B cell (primary cell): ENCODE measurements at regions of chr19 and their contacts with region 1.

Region 1: GRCh38 chr19:36687214-36688056 is at the start of gene ZNF567:
- DNase-seq: peak; percentile 96
- ATAC-seq: peak; percentile 94
- H3K4me3 ChIP-seq: peak within 1 kb of the TSS; percentile 48 to 90 (median 76)
- H3K4me3 Mint-ChIP-seq: peak within 1 kb of the TSS; percentile 100
- H3K27ac ChIP-seq: peak within 1 kb of the TSS; percentile 56 to 72
- H3K27ac Mint-ChIP-seq: peak within 1 kb of the TSS; percentile 96
- H3K4me1 ChIP-seq: peaks cover 14 to 19% of the 10 kb centered on the region in 2 donors
- H3K4me1 Mint-ChIP-seq: peaks cover 28% of the 10 kb centered on the region
- H3K27me3 ChIP-seq: no peaks in the 10 kb centered on the region
- H3K27me3 Mint-ChIP-seq: no peaks in the 10 kb centered on the region
- CTCF ChIP-seq: no peak
- total RNA-seq, gene ZNF567: 19.7 and 22.4 TPM in 2 replicates

Region 2: DNA sequence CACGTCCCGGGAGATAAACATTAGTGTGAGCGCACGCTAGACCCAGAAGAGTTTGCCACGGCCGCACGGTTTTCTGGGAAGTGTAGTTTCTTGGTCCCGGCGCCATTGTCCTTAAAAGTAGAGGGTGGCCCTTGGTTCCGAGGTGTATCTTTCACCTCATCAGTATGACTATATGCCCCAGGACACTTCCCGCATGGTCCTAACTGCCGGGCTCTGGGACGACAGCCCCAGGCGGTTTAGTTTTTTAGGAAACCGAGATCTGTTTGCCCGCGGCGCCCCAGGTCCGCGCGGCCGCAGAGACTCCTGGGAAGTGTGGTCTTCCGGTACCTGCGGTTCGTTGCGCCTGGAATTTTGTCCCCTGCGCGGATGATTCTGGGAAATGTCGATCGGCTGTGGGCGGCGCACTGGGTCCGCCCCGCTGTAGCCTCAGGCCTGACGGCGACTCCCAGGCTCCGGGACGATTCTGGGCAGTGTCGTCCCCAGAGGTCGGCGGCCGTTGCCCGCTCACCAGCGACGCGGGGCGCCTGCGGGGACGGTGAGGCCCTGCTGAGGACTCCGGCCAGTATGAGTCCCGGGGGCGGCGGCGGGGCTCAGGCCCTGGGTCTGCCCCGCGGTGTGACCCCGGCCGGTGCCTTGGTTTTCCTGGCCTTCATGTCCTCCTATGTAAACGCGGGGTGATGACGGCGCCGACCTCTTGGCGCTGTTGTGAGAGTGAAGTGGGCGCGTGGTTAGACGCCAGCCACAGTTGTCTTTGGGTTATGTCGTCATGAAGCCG is 1953.4 kb before region 1 on chr19 and contains the start of gene ZNF181:
- CTCF ChIA-PET with region 1: no interaction called
- POLR2A ChIA-PET with region 1: no interaction called
- intact Hi-C with region 1: loop called (anchors 10 kb)
- DNase-seq: peak; percentile 89
- ATAC-seq: peak; percentile 86
- H3K4me3 ChIP-seq: peak within 1 kb of the TSS; percentile 65 to 87 (median 80)
- H3K4me3 Mint-ChIP-seq: peak within 1 kb of the TSS; percentile 97
- H3K27ac ChIP-seq: peak within 1 kb of the TSS; percentile 73 to 91
- H3K27ac Mint-ChIP-seq: peak within 1 kb of the TSS; percentile 96
- H3K4me1 ChIP-seq: peaks cover 15 to 25% of the 10 kb centered on the region in 2 donors
- H3K4me1 Mint-ChIP-seq: peaks cover 25% of the 10 kb centered on the region
- H3K27me3 ChIP-seq: no peaks in the 10 kb centered on the region
- H3K27me3 Mint-ChIP-seq: no peaks in the 10 kb centered on the region
- CTCF ChIP-seq: no peak
- total RNA-seq, gene ZNF181: 13.6 and 13.8 TPM in 2 replicates

Region 3: DNA sequence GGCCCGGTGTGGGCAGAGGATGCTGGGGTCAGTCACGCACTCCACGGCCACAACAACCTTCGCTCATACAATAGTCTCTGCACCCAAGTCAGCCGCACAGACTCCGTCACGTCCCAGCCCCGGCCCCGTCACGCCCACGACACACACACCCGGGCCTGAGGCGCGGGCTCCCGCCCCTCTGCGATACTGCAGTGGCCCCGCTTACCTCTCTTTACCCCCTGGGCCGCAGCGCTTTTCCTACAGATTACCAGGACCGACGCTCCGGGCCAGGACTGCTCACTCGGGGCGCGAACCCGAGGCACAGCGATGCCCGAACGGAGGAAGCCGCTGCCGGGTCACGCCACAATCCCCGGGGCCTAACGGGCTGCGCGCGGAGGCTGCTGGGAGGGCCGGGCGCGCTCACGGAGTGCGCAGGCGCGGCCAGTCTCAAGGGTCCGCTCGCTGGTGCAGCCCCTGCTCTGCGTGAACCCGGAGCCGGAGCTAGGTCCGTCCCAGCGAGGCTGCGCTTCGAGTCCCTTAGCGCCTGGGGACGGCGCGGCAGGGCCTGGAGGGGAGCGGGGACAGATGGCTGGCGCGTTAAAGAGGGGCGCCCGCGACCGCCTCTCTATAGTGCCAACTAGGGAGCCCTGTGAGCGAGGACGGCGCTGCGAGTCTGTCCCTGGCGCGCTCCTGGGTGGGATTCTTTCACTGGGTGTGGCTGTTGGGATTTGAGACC is 269.0 kb before region 1 on chr19 and contains the start of gene ZFP82:
- CTCF ChIA-PET with region 1: no interaction called
- POLR2A ChIA-PET with region 1: no interaction called
- intact Hi-C with region 1: loop called (anchors 1 kb)
- DNase-seq: peak; percentile 91
- ATAC-seq: peak; percentile 96
- H3K4me3 ChIP-seq: peak within 1 kb of the TSS; percentile 27 to 98 (median 85)
- H3K4me3 Mint-ChIP-seq: peak within 1 kb of the TSS; percentile 97
- H3K27ac ChIP-seq: peak within 1 kb of the TSS; percentile 90 to 95
- H3K27ac Mint-ChIP-seq: peak within 1 kb of the TSS; percentile 96
- H3K4me1 ChIP-seq: peaks cover 17 to 23% of the 10 kb centered on the region in 2 donors
- H3K4me1 Mint-ChIP-seq: peaks cover 33% of the 10 kb centered on the region
- H3K27me3 ChIP-seq: peaks cover 0 to 21% (median 13%) of the 10 kb centered on the region in 4 experiments
- H3K27me3 Mint-ChIP-seq: peaks cover 17% of the 10 kb centered on the region
- CTCF ChIP-seq: no peak
- total RNA-seq, gene ZFP82: 14.4 and 14.6 TPM in 2 replicates

Region 4: DNA sequence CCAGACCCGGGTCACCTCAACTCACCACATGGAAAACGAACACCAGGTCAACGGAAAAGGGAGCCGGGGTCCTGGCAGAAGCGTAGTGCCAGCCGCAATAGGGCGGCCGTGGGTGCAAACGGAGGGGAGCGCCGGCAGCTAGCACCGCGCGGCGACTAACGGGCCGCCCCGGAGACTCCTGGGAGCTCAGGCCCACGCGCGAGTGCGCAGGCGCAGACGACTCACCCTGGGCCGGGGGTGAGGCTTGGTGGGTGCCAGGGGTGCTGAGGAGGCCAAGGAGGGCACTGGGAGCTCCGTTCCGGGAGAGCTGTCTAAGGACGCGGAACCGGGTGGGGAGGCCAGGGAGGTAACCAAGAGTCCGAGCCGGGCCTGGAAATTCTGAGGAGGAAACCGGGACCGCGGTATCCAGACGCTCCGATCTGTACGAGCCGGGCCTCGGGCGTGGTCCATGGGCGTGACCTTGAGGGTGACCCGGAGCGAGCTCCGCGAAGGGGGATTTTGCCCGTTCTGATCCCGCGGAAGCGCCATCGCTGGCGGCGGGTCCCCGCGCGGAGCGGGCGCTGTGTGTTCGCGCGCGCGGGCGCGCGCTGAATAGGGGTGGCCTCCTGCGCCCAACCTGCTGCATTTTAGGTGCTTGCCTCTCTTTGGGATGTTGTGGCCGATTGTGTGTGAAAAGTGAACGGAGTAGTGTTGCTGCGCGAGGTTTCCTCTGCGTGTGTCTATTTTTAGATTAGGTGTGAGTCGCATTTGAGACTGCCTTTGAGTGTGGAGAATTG is 82.1 kb before region 1 on chr19 and contains the start of gene ZNF382:
- CTCF ChIA-PET with region 1: no interaction called
- POLR2A ChIA-PET with region 1: no interaction called
- intact Hi-C with region 1: loop called (anchors 1 kb)
- DNase-seq: peak; percentile 91
- ATAC-seq: peak; percentile 77
- H3K4me3 ChIP-seq: peak within 1 kb of the TSS; percentile 24 to 96 (median 91)
- H3K4me3 Mint-ChIP-seq: peak within 1 kb of the TSS; percentile 97
- H3K27ac ChIP-seq: peak within 1 kb of the TSS; percentile 94 to 98
- H3K27ac Mint-ChIP-seq: peak within 1 kb of the TSS; percentile 96
- H3K4me1 ChIP-seq: peaks cover 12 to 16% of the 10 kb centered on the region in 2 donors
- H3K4me1 Mint-ChIP-seq: peaks cover 24% of the 10 kb centered on the region
- H3K27me3 ChIP-seq: no peaks in the 10 kb centered on the region
- H3K27me3 Mint-ChIP-seq: no peaks in the 10 kb centered on the region
- CTCF ChIP-seq: no peak
- total RNA-seq, gene ZNF382: 24.7 and 24.8 TPM in 2 replicates

Region 5: GRCh38 chr19:36665832-36666231 is 21.6 kb before region 1 on chr19:
- CTCF ChIA-PET with region 1: no interaction called
- POLR2A ChIA-PET with region 1: no interaction called
- intact Hi-C with region 1: loop called (anchors 1 kb)
- DNase-seq: peak; percentile 31
- ATAC-seq: no peak
- H3K4me3 ChIP-seq: peak overlapping the region; percentile 63 to 91 (median 80)
- H3K4me3 Mint-ChIP-seq: peak overlapping the region; percentile 98
- H3K27ac ChIP-seq: peak overlapping the region in 1 of 2 donors; percentile 81
- H3K27ac Mint-ChIP-seq: peak overlapping the region; percentile 90
- H3K4me1 ChIP-seq: peaks cover 15 to 19% of the 10 kb centered on the region in 2 donors
- H3K4me1 Mint-ChIP-seq: peaks cover 28% of the 10 kb centered on the region
- H3K27me3 ChIP-seq: no peaks in the 10 kb centered on the region
- H3K27me3 Mint-ChIP-seq: no peaks in the 10 kb centered on the region
- CTCF ChIP-seq: no peak

Region 6: DNA sequence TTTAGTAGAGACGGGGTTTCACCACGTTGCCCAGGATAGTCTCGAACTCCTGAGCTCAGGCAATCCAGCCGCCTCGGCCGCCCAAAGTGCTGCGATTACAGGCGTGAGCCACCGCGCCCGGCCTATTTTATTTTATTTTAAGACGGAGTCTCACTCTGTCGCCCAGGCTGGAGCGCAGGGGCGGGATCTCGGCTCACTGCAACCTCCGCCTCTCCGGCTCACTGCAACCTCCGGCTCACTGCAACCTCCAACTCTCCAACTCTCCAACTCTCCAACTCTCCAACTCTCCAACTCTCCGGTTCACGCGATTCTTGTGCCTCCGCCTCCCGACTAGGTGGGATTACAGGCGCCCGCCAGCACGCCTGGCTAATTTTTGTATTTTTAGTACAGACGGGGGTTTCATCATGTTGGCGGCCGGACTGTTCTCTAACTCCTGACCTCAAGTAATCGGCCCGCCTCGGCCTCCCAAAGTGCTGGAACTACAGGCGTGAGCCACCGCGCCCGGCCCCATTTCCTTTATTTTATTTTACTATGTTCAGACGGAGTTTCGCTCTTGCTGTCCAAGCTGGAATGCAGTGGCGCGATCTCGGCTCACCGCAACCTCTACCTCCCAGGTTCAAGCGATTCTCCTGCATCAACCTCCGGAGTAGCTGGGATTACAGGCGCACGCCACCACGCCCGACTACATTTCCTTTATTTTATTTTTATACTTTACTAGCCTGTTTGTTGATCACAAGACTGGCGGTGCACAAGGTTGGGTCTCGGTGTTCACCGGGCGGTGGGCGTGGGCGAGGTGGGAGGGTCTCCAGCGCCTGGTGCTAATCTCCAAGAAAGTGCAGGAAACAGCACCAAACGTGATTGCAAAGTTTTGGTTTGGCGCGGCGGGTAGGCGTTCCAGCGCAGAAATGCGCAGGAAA is 108.9 kb after region 1 on chr19:
- CTCF ChIA-PET with region 1: no interaction called
- POLR2A ChIA-PET with region 1: no interaction called
- intact Hi-C with region 1: loop called (anchors 1 kb)
- DNase-seq: no peak
- ATAC-seq: no peak
- H3K4me3 ChIP-seq: peak overlapping the region; percentile 63 to 91 (median 84)
- H3K4me3 Mint-ChIP-seq: peak overlapping the region; percentile 95
- H3K27ac ChIP-seq: peak overlapping the region; percentile 86 to 90
- H3K27ac Mint-ChIP-seq: peak overlapping the region; percentile 99
- H3K4me1 ChIP-seq: peaks cover 0 to 17% of the 10 kb centered on the region in 2 donors
- H3K4me1 Mint-ChIP-seq: peaks cover 25% of the 10 kb centered on the region
- H3K27me3 ChIP-seq: peaks cover 0 to 6% (median 0%) of the 10 kb centered on the region in 4 experiments
- H3K27me3 Mint-ChIP-seq: peaks cover 7% of the 10 kb centered on the region
- CTCF ChIP-seq: no peak